ENCODE measurements at regions of chr5 and their contacts with region 1.

Region 1: DNA sequence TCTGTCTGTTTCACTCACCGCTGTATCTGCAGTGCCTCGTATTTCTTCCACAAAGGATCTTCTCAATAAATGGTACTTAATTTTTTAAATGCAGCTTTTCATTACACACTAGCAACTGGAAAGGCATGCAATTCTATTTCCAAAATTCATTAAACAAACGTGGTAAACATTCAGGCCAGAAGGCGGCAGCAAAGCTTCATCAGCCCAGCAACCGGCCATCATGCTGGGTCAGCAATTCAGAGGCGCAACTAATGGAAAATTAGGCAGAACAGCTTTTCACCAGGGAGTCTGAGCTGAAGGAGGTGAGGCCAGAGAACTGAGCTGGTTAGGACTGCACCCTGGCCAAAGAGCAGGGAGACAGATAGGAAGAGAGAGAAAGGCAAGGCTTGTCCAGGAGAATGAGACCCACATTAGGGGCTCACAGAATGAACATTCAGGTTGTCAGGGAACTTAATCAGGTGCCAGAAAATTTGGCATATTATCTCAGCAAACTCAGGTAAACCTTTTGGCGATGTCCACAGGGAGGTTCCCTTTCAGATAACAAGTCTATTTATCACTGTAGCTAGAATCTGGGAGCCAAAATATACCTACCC is 17.7 kb upstream of the RNF180 start:
- DNase-seq: peak in 1 of 2 donors; percentile 85
- H3K4me3 ChIP-seq: no peak overlapping the region
- H3K27ac ChIP-seq: no peak overlapping the region
- H3K4me1 ChIP-seq: peaks cover 0 to 13% of the 10 kb centered on the region in 2 donors
- H3K27me3 ChIP-seq: no peaks in the 10 kb centered on the region
- CTCF ChIP-seq: peak; percentile 65 to 81 (median 72)

Region 2: GRCh38 chr5:64074533-64074932 is 73.4 kb before region 1 on chr5:
- intact Hi-C with region 1: loop called (anchors 5 kb)
- DNase-seq: no peak
- H3K4me3 ChIP-seq: no peak overlapping the region
- H3K27ac ChIP-seq: no peak overlapping the region
- H3K4me1 ChIP-seq: no peaks in the 10 kb centered on the region
- H3K27me3 ChIP-seq: no peaks in the 10 kb centered on the region
- CTCF ChIP-seq: peak; percentile 19 to 65 (median 46)

Region 3: DNA sequence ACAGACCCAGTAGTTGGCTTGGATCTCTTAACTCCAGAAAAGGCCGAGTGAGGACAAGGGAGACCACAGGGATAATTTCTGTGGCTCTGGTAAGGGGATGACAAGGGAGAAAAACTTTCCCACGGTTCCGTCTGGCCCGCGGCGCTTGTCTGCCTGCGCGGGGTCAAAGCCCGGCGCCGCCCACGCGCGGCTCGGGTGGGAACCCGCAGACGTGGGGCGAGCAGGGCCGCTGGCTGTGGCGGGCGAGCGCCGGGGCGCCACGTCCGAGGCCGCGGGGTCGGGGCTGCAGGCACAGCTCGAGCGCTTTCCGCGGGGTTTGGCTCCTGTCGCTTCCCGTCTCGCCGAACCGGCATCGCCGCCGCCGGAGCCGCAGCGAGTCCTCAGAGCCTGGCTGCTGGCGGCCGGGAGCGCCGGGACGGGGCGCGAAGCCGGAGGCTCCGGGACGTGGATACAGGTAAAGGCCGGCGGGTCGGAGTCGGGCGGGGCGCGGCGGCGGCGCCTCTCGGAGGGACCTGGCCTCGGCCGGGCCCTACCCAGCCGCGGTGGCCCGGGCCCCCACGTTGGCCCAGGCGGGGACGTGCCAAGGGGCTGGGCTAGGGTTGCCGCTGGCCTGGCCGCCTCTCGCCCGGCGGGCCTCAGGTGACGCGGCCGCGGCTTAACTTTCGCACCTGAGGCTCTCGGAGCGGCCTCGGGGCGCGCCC is 17.7 kb after region 1 on chr5 and contains the start of gene RNF180:
- intact Hi-C with region 1: loop called (anchors 2 kb)
- DNase-seq: peak in 1 of 2 donors; percentile 75
- H3K4me3 ChIP-seq: peak within 1 kb of the TSS; percentile 82 to 84
- H3K27ac ChIP-seq: peak within 1 kb of the TSS; percentile 95 to 97
- H3K4me1 ChIP-seq: peaks cover 4 to 13% of the 10 kb centered on the region in 2 donors
- H3K27me3 ChIP-seq: no peaks in the 10 kb centered on the region
- CTCF ChIP-seq: no peak
- total RNA-seq, gene RNF180: 7.9 TPM

Region 4: GRCh38 chr5:64207978-64208377 is 60.0 kb after region 1 on chr5:
- intact Hi-C with region 1: loop called (anchors 1 kb)
- DNase-seq: no peak
- H3K4me3 ChIP-seq: no peak overlapping the region
- H3K27ac ChIP-seq: no peak overlapping the region
- H3K4me1 ChIP-seq: no peaks in the 10 kb centered on the region
- H3K27me3 ChIP-seq: no peaks in the 10 kb centered on the region
- CTCF ChIP-seq: peak in 2 of 3 experiments; percentile 21 to 50

Region 5: DNA sequence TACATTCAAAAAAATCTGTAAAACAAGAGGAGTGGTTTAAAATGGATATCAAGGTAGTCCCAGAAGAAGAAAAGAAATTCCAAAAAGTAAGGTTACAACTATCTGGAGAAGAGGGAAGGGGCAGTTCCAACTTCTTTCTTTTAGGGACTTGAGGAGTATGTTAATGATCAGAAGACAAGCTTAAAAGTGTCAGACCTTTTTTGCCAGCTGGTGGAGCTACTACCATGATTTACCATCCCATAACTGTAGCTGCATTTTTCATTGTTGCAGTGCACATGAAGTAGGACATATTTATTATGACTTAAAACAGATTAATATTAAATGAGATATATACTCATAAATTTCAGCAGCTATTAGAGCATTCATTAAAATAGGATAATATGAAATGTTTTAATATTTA is 199.4 kb after region 1 on chr5:
- intact Hi-C with region 1: loop called (anchors 10 kb)
- DNase-seq: no peak
- H3K4me3 ChIP-seq: no peak overlapping the region
- H3K27ac ChIP-seq: no peak overlapping the region
- H3K4me1 ChIP-seq: peaks cover 0 to 11% of the 10 kb centered on the region in 2 donors
- H3K27me3 ChIP-seq: no peaks in the 10 kb centered on the region
- CTCF ChIP-seq: peak in 1 of 3 experiments; percentile 33

Region 6: GRCh38 chr5:64505769-64506566 is 358.0 kb after region 1 on chr5 and contains the start of gene RGS7BP:
- intact Hi-C with region 1: loop called (anchors 5 kb)
- DNase-seq: peak in 1 of 2 donors; percentile 72
- H3K4me3 ChIP-seq: peak within 1 kb of the TSS; percentile 48 to 83
- H3K27ac ChIP-seq: peak within 1 kb of the TSS; percentile 67 to 69
- H3K4me1 ChIP-seq: peaks cover 0 to 3% of the 10 kb centered on the region in 2 donors
- H3K27me3 ChIP-seq: no peaks in the 10 kb centered on the region
- CTCF ChIP-seq: peak in 1 of 3 experiments; percentile 32
- total RNA-seq, gene RGS7BP: 9.2 TPM

Region 7: DNA sequence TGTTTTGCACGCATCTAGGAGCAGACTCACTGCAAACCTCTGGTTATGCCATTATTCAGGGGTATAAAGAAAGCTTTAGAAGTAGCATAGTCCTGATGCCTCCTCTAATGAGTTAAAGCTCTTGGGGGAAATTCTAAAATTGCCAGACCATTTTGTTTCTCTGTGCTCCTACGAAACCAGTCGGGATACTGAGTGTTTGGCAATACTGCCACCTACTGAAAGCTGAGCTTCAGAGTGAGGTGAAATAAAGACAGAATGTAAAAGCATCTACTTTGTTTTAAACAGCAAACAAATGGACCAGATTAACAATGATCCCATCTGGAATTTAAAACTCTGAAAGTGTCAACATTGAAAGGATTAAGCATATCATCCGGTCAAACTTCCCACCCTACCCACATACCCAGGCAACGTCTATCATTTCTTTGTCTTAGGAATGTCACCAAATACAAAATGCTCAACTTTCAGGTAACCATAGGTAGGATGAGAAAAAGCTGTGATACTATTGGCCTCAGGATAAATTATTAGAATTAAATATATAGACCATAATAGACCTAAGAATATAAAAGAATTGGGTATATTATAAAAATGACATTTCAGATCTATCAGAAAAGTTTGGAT is 464.5 kb after region 1 on chr5:
- intact Hi-C with region 1: loop called (anchors 2 kb)
- DNase-seq: peak in 1 of 2 donors; percentile 69
- H3K4me3 ChIP-seq: no peak overlapping the region
- H3K27ac ChIP-seq: no peak overlapping the region
- H3K4me1 ChIP-seq: no peaks in the 10 kb centered on the region
- H3K27me3 ChIP-seq: no peaks in the 10 kb centered on the region
- CTCF ChIP-seq: peak; percentile 70 to 80 (median 71)